ENCODE measurements at regions of chr18 and their contacts with region 1.

Region 1: DNA sequence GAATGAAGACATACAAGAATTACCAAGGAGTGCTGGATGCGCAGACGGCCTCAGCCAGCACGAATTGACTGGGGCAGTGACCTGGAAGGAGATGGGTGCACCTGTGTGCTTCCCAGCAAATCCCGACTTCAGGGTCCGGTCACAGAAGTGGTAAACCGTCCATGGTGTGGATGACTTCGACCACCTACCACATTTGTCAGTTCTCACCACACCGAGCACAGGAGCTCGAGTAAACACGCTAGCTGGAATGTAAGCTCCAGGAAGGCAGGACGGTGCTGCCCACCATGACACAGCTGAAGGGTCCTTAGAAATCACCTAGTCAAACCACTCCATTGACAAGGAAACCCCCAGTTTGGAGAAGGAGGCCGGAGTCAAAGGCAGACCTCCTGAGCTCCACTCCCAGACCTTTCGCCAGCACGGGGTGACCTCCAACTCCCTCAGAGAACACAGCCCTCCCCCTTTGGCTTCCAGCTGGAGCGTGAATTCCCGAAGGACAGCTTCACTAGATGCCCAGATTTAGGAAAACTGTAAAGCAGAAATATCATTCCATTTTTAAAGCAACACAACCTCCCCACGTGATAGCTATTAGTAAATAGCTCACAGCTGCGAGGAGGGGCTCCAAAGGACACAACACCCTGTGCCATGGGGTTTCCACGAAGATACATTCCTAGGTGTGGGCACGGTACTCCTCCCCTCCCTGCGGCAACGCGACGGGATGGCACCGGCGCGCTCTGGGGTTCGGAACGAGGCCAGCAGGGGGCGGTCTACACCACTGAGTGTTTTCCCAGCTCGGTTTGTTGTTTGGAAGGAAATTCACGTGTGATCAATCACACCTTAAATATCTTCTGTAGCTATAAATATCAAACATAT is 34.1 kb upstream of the GNAL start:
- DNase-seq: peak; percentile 13 to 94
- H3K4me3 ChIP-seq: peak overlapping the region in 2 of 4 experiments; percentile 10 to 35; a peak in 3 of 8 replicates
- H3K27ac ChIP-seq: no peak overlapping the region
- H3K4me1 ChIP-seq: no peaks in the 10 kb centered on the region
- H3K27me3 ChIP-seq: peaks cover 0 to 8% (median 3%) of the 10 kb centered on the region in 4 experiments; a peak in 4 of 7 replicates
- CTCF ChIP-seq: peak; percentile 84 to 96 (median 88)
- EP300 ChIP-seq: no peak
- POLR2A ChIP-seq: no peak
- RAD21 ChIP-seq: peak; percentile 90 to 92

Region 2: GRCh38 chr18:11669271-11669947 is 14.4 kb after region 1 on chr18:
- CTCF ChIA-PET with region 1: interaction called, 41 read pairs
- POLR2A ChIA-PET with region 1: no interaction called
- DNase-seq: no peak
- H3K4me3 ChIP-seq: no peak overlapping the region
- H3K27ac ChIP-seq: no peak overlapping the region
- H3K4me1 ChIP-seq: no peaks in the 10 kb centered on the region; a peak in 2 of 7 replicates
- H3K27me3 ChIP-seq: no peaks in the 10 kb centered on the region; a peak in 2 of 7 replicates
- CTCF ChIP-seq: no peak
- EP300 ChIP-seq: no peak
- POLR2A ChIP-seq: no peak
- RAD21 ChIP-seq: no peak

Region 3: GRCh38 chr18:11710578-11710977 is 55.6 kb after region 1 on chr18:
- CTCF ChIA-PET with region 1: interaction called, 14 read pairs
- POLR2A ChIA-PET with region 1: no interaction called
- DNase-seq: no peak
- H3K4me3 ChIP-seq: no peak overlapping the region
- H3K27ac ChIP-seq: no peak overlapping the region
- H3K4me1 ChIP-seq: peaks cover 0 to 13% (median 1%) of the 10 kb centered on the region in 4 experiments; a peak in 1 of 7 replicates
- H3K27me3 ChIP-seq: no peaks in the 10 kb centered on the region
- CTCF ChIP-seq: no peak
- EP300 ChIP-seq: no peak
- POLR2A ChIP-seq: no peak
- RAD21 ChIP-seq: no peak

Region 4: DNA sequence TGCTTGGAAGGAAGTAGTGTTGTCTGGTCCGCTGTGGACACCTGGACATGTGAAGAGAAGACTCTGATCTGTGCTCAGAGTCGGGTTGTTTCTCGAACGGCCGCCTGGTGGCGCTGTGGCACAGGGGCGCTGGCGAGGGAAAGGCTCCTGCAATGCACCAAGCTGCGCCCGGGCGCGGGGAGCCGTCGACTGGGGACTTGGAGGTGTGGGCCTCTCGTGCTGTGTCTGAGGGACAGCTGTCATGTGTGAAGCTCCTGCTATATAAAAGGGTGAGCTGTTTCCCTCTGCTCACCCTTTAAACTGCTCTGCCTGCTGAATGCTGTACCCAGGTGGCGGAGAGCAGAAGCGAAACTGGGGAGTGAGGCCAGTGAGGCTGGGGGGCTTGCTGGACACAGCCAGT is 78.1 kb after region 1 on chr18:
- CTCF ChIA-PET with region 1: interaction called, 109 read pairs
- POLR2A ChIA-PET with region 1: no interaction called
- DNase-seq: peak; percentile 54 to 97
- H3K4me3 ChIP-seq: no peak overlapping the region
- H3K27ac ChIP-seq: no peak overlapping the region
- H3K4me1 ChIP-seq: peaks cover 0 to 2% (median 0%) of the 10 kb centered on the region in 4 experiments; a peak in 2 of 7 replicates
- H3K27me3 ChIP-seq: peaks cover 0 to 3% (median 0%) of the 10 kb centered on the region in 4 experiments; a peak in 1 of 7 replicates
- CTCF ChIP-seq: peak; percentile 82 to 96 (median 92)
- EP300 ChIP-seq: no peak
- POLR2A ChIP-seq: no peak
- RAD21 ChIP-seq: peak; percentile 94 to 96

Region 5: DNA sequence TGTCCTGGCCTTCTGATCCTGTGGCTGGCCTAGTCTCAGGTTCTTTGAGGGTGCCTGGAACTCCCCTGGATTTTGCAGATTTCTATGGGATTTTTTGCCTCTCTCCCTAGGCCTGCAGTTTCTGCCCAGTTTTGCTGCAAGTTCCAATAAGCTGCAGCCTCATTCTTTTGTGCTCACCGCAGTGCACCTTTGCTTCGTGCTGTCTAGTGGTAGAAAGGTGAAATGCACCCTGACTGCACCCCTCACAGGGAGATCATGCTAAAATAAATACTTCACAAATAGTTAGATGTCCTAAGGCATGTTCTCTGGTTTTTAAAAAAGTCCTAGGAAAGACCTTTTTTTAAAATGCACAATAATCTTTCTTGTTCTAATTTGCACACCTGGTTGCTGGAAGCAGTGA is 106.6 kb after region 1 on chr18:
- CTCF ChIA-PET with region 1: interaction called, 10 read pairs
- POLR2A ChIA-PET with region 1: no interaction called
- DNase-seq: no peak
- H3K4me3 ChIP-seq: no peak overlapping the region
- H3K27ac ChIP-seq: no peak overlapping the region
- H3K4me1 ChIP-seq: peaks cover 0 to 13% (median 7%) of the 10 kb centered on the region in 4 experiments
- H3K27me3 ChIP-seq: no peaks in the 10 kb centered on the region
- CTCF ChIP-seq: peak; percentile 30 to 55 (median 43); a peak in 3 of 4 replicates
- EP300 ChIP-seq: no peak
- POLR2A ChIP-seq: no peak
- RAD21 ChIP-seq: peak; percentile 36 to 51

Region 6: GRCh38 chr18:12165038-12165768 is 510.2 kb after region 1 on chr18:
- CTCF ChIA-PET with region 1: no interaction called
- POLR2A ChIA-PET with region 1: no interaction called
- DNase-seq: no peak
- H3K4me3 ChIP-seq: no peak overlapping the region
- H3K27ac ChIP-seq: no peak overlapping the region
- H3K4me1 ChIP-seq: no peaks in the 10 kb centered on the region
- H3K27me3 ChIP-seq: no peaks in the 10 kb centered on the region
- CTCF ChIP-seq: no peak
- EP300 ChIP-seq: no peak
- POLR2A ChIP-seq: no peak
- RAD21 ChIP-seq: no peak

Measured in H1 (cell line).